ENCODE measurements at regions of chr7 and their contacts with region 1.

Region 1: DNA sequence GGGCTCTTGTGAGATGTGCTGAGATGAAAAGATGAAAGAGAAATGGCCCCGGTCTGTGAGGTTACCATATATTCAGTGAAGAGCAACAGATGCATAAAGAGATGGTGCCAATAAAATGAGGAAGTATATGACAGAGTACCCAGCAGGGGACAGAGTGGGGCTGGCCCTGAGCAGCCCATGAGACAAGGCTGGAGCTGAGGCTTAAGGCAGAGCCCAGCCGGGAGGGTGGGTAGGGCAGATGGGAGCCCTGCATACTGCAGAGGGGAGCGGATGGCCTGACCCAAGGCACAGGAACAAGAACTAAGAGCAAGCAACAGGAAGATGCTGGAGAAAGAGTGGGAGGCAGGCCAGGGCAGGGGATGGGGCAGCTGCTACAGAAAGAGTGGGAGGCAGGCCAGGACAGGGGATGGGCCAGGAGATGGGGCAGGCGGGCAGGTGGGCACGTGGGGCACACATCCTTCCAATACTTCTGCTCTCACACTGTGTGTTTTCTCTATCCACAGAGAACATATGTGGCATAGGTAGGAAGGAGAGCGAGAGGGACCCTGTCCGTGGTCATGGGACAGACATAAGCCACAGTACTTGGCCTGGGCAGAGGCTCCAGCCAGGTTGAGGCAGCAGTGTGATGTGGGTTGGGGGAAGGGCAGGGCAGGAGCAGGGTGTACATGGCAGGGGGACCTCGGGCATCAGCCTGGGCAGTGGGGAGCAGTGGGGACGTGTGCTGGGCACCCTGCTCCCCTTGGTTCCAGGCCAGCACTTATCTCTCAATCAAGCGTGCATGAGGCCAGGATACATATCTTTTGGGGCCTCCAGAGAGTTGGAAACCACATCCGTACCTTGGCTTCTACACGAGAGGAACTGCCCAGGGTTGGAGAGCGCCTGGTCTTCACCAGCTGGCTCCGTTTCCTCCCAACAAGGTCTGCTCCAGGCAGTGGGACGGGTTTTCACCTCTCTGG is 91.6 kb upstream of the IKZF1 start:
- DNase-seq: peak; percentile 6
- CTCF ChIP-seq: no peak

Region 2: GRCh38 chr7:49995681-49996080 is 217.3 kb before region 1 on chr7:
- in situ Hi-C with region 1: no loop called
- DNase-seq: no peak
- CTCF ChIP-seq: no peak

Region 3: DNA sequence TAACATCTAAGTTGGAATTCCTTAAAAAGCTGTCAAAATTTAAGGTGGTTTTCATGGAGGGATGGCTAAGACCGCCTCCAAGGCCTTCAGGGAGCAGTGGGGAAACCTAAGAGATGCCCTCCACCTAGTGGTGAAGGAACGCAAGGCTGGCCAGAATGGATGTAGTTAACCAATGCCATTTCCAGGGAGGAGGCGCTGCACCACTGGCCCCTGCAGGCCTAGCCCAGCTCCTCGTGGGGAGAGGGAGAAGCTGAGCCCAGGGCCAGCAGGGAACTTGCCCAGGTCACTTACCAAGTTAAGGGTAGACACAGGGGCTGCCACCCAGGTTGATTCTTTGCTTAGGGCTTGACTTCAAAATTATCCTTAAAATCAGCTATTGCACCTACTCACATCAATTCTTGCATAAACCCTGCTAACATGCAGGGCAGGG is 205.2 kb after region 1 on chr7:
- in situ Hi-C with region 1: loop called (anchors 25 kb)
- DNase-seq: peak; percentile 69
- CTCF ChIP-seq: peak; percentile 96

Region 4: GRCh38 chr7:50857804-50858489 is 645.0 kb after region 1 on chr7:
- in situ Hi-C with region 1: no loop called
- DNase-seq: no peak
- CTCF ChIP-seq: no peak

Region 5: DNA sequence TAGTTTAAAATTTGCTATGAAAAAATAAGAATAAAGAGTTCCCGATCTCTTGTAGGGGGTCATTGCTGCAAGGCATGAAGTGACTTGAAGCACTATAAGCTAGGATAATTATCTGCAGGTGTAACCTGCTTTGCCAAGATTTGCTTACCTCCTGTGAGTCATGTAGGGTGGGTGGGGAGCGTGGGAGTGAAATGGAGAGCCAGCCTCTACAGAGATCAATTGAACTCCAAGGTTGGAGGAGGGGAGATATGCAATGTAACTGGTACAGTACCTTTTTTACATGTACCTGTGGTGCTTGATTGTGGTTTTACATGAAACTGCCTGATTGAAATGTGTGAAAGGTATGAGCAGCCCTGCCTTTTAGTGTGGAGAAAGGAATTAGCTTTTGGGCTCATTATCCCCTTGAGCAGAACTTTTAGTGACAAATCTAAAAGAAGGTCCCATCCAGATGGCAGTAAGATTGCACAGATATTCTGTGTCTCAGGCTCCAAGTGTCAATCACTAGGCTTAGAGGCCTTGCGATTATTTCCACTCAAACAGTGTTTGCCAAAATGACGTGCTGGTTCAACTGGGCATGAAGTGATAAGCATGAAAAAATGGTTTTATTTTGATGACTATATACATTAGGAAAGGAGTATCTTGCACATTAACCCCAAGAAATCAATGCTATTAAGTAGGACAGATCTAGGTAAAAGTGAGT is 708.3 kb after region 1 on chr7:
- in situ Hi-C with region 1: no loop called
- DNase-seq: no peak
- CTCF ChIP-seq: no peak